K562 (cell line): ENCODE measurements at regions of chr1 and their contacts with region 1.

Region 1: GRCh38 chr1:178749581-178750166 is 24.6 kb downstream of the RALGPS2 start:
- DNase-seq: no peak
- ATAC-seq: no peak
- H3K4me3 ChIP-seq: no peak overlapping the region
- H3K27ac ChIP-seq: no peak overlapping the region
- H3K4me1 ChIP-seq: no peaks in the 10 kb centered on the region
- H3K27me3 ChIP-seq: peaks cover 0 to 2% of the 10 kb centered on the region in 2 experiments; a peak in 3 of 5 replicates
- CTCF ChIP-seq: no peak
- EP300 ChIP-seq: no peak
- POLR2A ChIP-seq: no peak
- RAD21 ChIP-seq: no peak

Region 2: DNA sequence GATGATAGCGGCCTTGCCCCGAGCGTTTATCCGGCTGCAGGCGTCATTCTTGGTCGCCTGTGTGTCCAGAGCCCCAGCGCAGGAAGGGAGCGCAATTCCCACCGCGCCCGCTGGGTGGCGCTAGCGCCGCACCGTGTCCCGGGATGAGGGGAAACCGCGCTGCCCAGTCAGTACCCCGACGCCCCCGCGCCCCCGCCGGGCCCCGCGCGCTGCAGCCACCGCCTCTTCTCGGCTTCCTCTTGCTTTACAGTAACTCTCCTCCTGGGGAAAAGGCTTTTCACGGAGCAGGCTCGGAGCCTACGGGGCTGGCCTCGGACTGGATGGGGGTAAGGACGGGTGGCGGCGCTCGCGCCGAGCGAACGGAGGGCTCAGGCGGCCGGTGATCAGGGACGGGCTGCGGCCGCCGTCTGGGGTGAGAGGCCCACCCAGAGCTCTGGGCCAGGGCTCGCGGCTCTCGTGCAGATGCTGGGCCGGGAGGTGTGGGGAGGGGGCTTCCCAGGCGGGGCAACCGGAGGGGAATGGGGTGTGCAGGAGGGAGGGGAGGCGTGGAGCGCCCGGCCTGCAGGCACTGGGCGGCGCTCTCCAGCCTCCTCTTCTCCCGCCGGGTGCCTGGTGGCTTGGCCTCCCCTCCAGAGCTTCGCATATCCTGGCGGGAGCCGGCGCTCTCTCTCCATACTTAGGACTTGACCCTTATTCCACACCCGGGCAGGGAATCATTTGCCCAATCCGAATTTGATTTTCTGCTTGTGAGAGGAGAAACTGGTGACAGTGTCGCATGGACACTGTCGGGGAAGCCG is 206.9 kb before region 1 on chr1:
- CTCF ChIA-PET with region 1: interaction called, 15 read pairs
- POLR2A ChIA-PET with region 1: no interaction called
- in situ Hi-C with region 1: no loop called
- intact Hi-C with region 1: loop called (anchors 1 kb)
- DNase-seq: peak; percentile 85 to 94 (median 91)
- ATAC-seq: peak; percentile 96
- H3K4me3 ChIP-seq: peak overlapping the region; percentile 51
- H3K27ac ChIP-seq: no peak overlapping the region
- H3K4me1 ChIP-seq: peaks cover 0 to 16% of the 10 kb centered on the region in 2 experiments; a peak in 4 of 5 replicates
- H3K27me3 ChIP-seq: peaks cover 20 to 44% of the 10 kb centered on the region in 2 experiments
- CTCF ChIP-seq: peak; percentile 91 to 94 (median 93)
- EP300 ChIP-seq: no peak
- POLR2A ChIP-seq: no peak
- RAD21 ChIP-seq: peak; percentile 83 to 86

Region 3: DNA sequence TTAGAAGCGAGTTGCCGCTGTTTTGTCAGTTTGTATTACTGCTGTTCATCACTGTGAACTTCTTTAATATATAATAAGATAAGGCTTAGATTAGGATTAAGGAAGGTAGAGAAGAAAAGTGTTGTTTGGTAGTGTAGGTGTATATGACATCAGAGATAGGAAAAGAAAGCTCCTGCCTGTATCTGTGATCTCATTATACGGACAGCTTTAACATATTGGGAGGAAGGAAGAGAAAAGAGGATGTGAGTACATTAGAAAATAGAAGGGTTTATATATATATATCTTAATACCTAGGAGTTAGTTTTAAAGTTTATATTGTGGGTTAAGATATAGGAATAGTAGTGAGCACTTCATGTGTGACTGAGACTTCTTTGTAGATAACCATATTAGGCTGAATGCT is 46.3 kb after region 1 on chr1:
- CTCF ChIA-PET with region 1: no interaction called
- POLR2A ChIA-PET with region 1: no interaction called
- in situ Hi-C with region 1: no loop called
- intact Hi-C with region 1: no loop called
- DNase-seq: no peak
- ATAC-seq: no peak
- H3K4me3 ChIP-seq: no peak overlapping the region
- H3K27ac ChIP-seq: no peak overlapping the region
- H3K4me1 ChIP-seq: no peaks in the 10 kb centered on the region
- H3K27me3 ChIP-seq: no peaks in the 10 kb centered on the region
- CTCF ChIP-seq: no peak
- EP300 ChIP-seq: no peak
- POLR2A ChIP-seq: no peak
- RAD21 ChIP-seq: no peak